ENCODE measurements at regions of chr22 and their contacts with region 1.

Region 1: GRCh38 chr22:45553351-45554039 is 50.8 kb downstream of the FBLN1 start:
- DNase-seq: peak; percentile 76 to 95
- H3K4me3 ChIP-seq: peak overlapping the region in 1 of 2 donors; percentile 12
- H3K27ac ChIP-seq: peak overlapping the region; percentile 94 to 97
- H3K4me1 ChIP-seq: peaks cover 25 to 55% of the 10 kb centered on the region in 2 donors
- H3K27me3 ChIP-seq: no peaks in the 10 kb centered on the region
- CTCF ChIP-seq: peak; percentile 92 to 97 (median 94)

Region 2: GRCh38 chr22:45163451-45164269 is 389.8 kb before region 1 on chr22 and contains the start of gene NUP50:
- intact Hi-C with region 1: loop called (anchors 10 kb)
- DNase-seq: peak; percentile 72 to 96
- H3K4me3 ChIP-seq: peak within 1 kb of the TSS; percentile 96 to 100
- H3K27ac ChIP-seq: peak within 1 kb of the TSS; percentile 74 to 81
- H3K4me1 ChIP-seq: peaks cover 0 to 19% of the 10 kb centered on the region in 2 donors
- H3K27me3 ChIP-seq: no peaks in the 10 kb centered on the region
- CTCF ChIP-seq: peak; percentile 12 to 19 (median 18)
- total RNA-seq, gene NUP50: 75.8 TPM

Region 3: DNA sequence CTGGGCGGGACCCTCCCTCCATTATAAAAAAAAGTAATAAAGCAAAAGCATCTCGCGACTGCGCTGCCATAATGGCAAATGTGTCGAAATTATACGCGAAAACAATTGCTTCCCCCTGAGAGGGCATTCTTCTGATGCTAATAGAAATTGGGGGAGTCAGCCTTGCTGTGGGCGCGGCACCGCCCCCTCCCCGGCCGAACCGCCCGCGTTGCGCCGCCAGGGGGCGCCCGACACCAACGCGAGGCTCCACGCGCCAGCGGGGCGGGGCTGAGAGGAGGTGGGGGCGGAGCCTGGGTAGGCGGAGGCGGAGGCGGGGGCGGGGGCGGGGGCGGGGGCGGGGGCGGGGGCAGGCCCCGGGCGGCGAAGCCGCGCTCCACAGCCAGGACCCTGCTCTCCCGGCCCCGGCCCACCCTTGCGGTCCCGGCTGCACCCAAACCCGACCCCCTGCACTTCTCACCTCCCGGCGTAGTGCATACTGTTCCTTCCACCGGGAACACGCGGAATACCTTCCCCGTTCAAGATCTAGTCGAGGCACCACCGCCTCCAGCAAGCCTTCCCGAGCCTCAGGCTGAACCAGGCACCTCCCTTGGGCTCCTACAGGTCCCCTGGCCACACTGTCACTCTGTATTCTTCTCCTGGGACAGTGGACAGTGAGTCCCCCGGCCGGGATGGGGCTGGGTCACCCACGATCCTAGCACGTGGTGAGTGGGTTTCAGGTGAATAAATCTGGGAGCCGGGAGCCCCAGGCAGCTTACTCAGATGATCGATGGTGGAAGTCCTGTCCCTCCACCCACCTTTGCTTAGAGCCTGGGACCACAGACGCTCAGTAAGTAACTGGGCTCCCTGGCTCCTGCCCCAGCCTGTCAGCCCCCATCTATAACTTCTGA is 284.3 kb before region 1 on chr22:
- intact Hi-C with region 1: loop called (anchors 1 kb)
- DNase-seq: peak in 1 of 2 donors; percentile 91
- H3K4me3 ChIP-seq: peak overlapping the region; percentile 70 to 72
- H3K27ac ChIP-seq: peak overlapping the region in 1 of 2 donors; percentile 17
- H3K4me1 ChIP-seq: peaks cover 8 to 27% of the 10 kb centered on the region in 2 donors
- H3K27me3 ChIP-seq: no peaks in the 10 kb centered on the region
- CTCF ChIP-seq: peak; percentile 74 to 97 (median 83)

Region 4: GRCh38 chr22:45318168-45318557 is 235.3 kb before region 1 on chr22:
- intact Hi-C with region 1: loop called (anchors 1 kb)
- DNase-seq: peak; percentile 80 to 96
- H3K4me3 ChIP-seq: peak overlapping the region; percentile 35 to 45
- H3K27ac ChIP-seq: peak overlapping the region; percentile 96
- H3K4me1 ChIP-seq: peaks cover 11 to 50% of the 10 kb centered on the region in 2 donors
- H3K27me3 ChIP-seq: no peaks in the 10 kb centered on the region
- CTCF ChIP-seq: no peak

Region 5: GRCh38 chr22:45441138-45441537 is 112.4 kb before region 1 on chr22:
- intact Hi-C with region 1: loop called (anchors 1 kb)
- DNase-seq: peak in 1 of 2 donors; percentile 81
- H3K4me3 ChIP-seq: no peak overlapping the region
- H3K27ac ChIP-seq: no peak overlapping the region
- H3K4me1 ChIP-seq: no peaks in the 10 kb centered on the region
- H3K27me3 ChIP-seq: no peaks in the 10 kb centered on the region
- CTCF ChIP-seq: peak; percentile 66 to 77 (median 67)

Region 6: GRCh38 chr22:45511847-45512281 is 41.6 kb before region 1 on chr22:
- intact Hi-C with region 1: loop called (anchors 2 kb)
- DNase-seq: peak; percentile 34 to 87
- H3K4me3 ChIP-seq: no peak overlapping the region
- H3K27ac ChIP-seq: peak overlapping the region; percentile 68 to 70
- H3K4me1 ChIP-seq: peaks cover 12 to 43% of the 10 kb centered on the region in 2 donors
- H3K27me3 ChIP-seq: no peaks in the 10 kb centered on the region
- CTCF ChIP-seq: no peak

Region 7: GRCh38 chr22:45638834-45639746 is 85.6 kb after region 1 on chr22:
- intact Hi-C with region 1: no loop called
- DNase-seq: peak in 1 of 2 donors; percentile 72
- H3K4me3 ChIP-seq: no peak overlapping the region
- H3K27ac ChIP-seq: no peak overlapping the region
- H3K4me1 ChIP-seq: no peaks in the 10 kb centered on the region
- H3K27me3 ChIP-seq: no peaks in the 10 kb centered on the region
- CTCF ChIP-seq: no peak

Measured in ascending aorta (tissue), 2 donors.